PC-9 (cell line): ENCODE measurements at regions of chr1 and their contacts with region 1.

Region 1: DNA sequence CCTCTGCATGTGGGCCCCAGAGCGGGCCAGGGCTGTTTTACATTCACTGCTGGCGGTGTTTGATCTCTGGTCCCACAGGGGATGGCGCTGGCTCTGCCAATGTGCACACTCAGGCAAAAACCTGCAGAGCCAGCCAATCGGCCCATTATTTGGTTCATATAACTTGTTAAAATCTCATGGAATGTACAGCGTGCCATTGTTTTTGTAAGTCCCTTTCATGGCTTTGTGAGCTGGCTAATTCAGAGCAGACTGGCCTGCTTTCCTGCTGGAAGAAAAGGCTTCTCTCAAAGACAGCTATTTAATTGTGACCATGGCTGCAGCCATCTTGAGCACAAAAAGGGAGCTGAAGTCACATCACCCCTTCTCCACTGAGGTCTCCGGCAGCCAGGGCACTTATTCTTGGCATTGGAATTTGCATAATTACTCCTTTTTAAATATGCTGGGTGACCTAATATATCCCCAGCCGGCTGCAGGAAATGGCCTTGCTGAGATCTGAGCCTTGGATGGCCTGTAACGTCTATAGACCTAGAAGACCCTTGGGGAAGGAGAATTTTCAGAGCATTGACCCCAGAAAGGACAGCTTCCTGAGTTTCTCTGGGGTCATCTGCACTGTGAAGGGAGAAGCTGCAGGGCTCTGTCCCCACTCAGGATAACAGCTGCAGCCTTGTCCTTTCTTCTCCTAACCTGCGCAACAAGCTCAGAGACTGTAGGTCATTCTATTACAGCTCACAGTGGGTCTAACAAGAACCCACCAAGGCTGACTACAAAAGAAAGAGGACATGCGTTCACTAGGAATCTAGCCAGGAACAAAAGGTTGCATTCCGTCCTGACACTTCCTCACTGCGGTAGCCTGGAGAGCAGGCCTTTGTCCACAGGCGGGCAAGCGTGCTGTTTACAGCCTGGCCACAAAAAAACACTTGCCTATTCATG is 45.8 kb downstream of the BCAR3 start:
- DNase-seq: no peak
- H3K4me3 ChIP-seq: no peak overlapping the region
- H3K27ac ChIP-seq: no peak overlapping the region
- H3K4me1 ChIP-seq: peaks cover 61% of the 10 kb centered on the region
- H3K27me3 ChIP-seq: no peaks in the 10 kb centered on the region
- CTCF ChIP-seq: no peak

Region 2: DNA sequence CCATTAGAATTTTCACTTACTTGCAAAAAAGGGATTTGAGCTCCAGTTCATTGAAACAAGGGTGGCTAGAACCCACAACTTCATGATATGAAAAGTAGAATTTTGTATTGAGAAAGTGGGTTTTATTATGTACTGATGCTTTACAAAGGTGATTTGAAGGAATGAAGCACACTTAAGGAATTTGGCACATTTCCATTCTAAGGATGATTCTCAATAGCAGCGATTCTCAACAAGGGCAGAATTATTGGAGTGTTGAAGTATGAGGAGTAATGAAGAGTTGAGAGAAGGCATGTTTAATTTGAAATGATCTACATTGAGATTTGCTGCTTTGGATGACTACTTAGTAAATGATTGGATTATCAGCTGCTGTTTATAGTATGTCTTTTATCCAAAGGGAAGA is 133.3 kb before region 1 on chr1:
- CTCF ChIA-PET with region 1: no interaction called
- POLR2A ChIA-PET with region 1: no interaction called
- intact Hi-C with region 1: no loop called
- DNase-seq: no peak
- H3K4me3 ChIP-seq: no peak overlapping the region
- H3K27ac ChIP-seq: no peak overlapping the region
- H3K4me1 ChIP-seq: no peaks in the 10 kb centered on the region
- H3K27me3 ChIP-seq: no peaks in the 10 kb centered on the region
- CTCF ChIP-seq: no peak

Region 3: GRCh38 chr1:93661829-93662474 is 26.1 kb after region 1 on chr1:
- CTCF ChIA-PET with region 1: interaction called, 6 read pairs
- POLR2A ChIA-PET with region 1: interaction called, 10 read pairs
- intact Hi-C with region 1: loop called (anchors 2 kb)
- DNase-seq: peak; percentile 60 to 83
- H3K4me3 ChIP-seq: peak overlapping the region; percentile 1; the same call in 1 of the 2 replicates
- H3K27ac ChIP-seq: peak overlapping the region; percentile 86
- H3K4me1 ChIP-seq: peaks cover 74% of the 10 kb centered on the region
- H3K27me3 ChIP-seq: no peaks in the 10 kb centered on the region
- CTCF ChIP-seq: no peak

Region 4: DNA sequence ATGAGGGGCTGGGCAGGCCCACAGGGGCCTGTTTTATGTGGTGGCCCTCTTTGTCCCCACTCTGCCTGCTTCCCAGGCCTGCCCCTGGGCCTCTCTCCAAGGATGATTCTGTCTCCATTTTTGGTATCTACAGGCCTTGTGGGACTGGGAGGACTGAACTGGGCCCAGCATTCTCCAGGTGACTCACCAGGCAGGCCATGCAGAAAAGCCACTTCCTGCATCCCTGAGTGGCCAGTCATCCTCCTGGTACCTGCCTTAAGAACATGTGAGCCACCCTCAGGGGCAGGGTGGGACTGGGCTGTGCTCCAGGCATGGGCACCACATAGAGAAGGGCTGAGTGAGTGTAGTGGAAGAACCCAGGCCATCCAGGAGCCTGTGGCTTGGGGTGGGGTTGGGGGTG is 65.7 kb after region 1 on chr1:
- CTCF ChIA-PET with region 1: interaction called, 11 read pairs
- POLR2A ChIA-PET with region 1: no interaction called
- intact Hi-C with region 1: no loop called
- DNase-seq: peak; percentile 97 to 100
- H3K4me3 ChIP-seq: no peak overlapping the region
- H3K27ac ChIP-seq: peak overlapping the region; percentile 97
- H3K4me1 ChIP-seq: peaks cover 68% of the 10 kb centered on the region
- H3K27me3 ChIP-seq: no peaks in the 10 kb centered on the region
- CTCF ChIP-seq: no peak

Region 5: DNA sequence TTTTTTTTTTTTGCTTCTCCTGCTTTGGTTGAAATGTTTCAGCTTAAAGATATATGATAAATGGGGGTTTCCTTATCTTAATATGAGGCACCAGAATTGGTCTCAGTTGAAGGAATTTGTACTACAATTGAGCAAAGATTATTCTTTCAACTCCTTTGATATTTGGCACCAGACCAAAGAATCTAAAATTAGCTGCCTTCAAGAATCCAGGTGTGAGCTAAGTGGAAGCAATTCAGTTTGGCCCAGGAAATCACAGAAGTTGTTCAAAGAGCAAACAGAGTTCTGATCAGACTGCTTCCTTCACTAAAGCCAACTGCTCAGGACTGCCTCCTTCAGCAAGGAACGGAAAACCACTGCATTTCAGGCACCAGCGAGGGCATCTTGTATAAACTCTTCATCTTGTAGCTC is 114.0 kb after region 1 on chr1:
- CTCF ChIA-PET with region 1: no interaction called
- POLR2A ChIA-PET with region 1: no interaction called
- intact Hi-C with region 1: loop called (anchors 1 kb)
- DNase-seq: peak in 1 of 2 experiments; percentile 82
- H3K4me3 ChIP-seq: no peak overlapping the region
- H3K27ac ChIP-seq: peak overlapping the region; percentile 49
- H3K4me1 ChIP-seq: peaks cover 53% of the 10 kb centered on the region
- H3K27me3 ChIP-seq: no peaks in the 10 kb centered on the region
- CTCF ChIP-seq: no peak; the same call in 1 of the 2 replicates

Region 6: GRCh38 chr1:93773049-93773838 is 137.4 kb after region 1 on chr1:
- CTCF ChIA-PET with region 1: no interaction called
- POLR2A ChIA-PET with region 1: interaction called, 10 read pairs
- intact Hi-C with region 1: no loop called
- DNase-seq: no peak
- H3K4me3 ChIP-seq: peak overlapping the region; percentile 72
- H3K27ac ChIP-seq: peak overlapping the region; percentile 95
- H3K4me1 ChIP-seq: peaks cover 82% of the 10 kb centered on the region
- H3K27me3 ChIP-seq: no peaks in the 10 kb centered on the region
- CTCF ChIP-seq: no peak